Calu3 (cell line): ENCODE measurements at regions of chr2 and their contacts with region 1.

Region 1: GRCh38 chr2:163471947-163472346 is 263.9 kb downstream of the FIGN start:
- DNase-seq: peak; percentile 20
- H3K4me3 Mint-ChIP-seq: no peak overlapping the region
- H3K27ac Mint-ChIP-seq: no peak overlapping the region
- H3K4me1 Mint-ChIP-seq: peaks cover 8% of the 10 kb centered on the region
- H3K27me3 Mint-ChIP-seq: no peaks in the 10 kb centered on the region
- CTCF ChIP-seq: peak; percentile 34

Region 2: DNA sequence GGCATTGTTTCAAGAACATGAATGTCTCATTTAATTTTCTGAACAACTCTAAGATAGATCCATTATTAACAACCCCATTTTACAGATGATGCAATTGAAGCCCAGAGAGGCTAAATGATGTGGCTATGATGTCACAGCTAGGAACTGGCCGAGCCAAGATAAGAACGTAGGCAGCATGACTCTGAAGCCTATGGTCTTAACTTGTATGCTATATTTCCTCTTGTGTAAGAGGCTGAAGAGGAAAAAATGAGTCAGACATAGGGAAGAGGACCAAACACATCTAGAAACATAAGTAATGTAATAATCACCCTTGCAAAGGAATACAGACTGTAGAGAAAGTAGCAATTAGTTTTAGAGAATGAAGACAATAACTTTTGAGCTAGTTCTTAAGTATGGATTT is 152.9 kb before region 1 on chr2:
- CTCF ChIA-PET with region 1: no interaction called
- intact Hi-C with region 1: no loop called
- DNase-seq: no peak
- H3K4me3 Mint-ChIP-seq: no peak overlapping the region
- H3K27ac Mint-ChIP-seq: no peak overlapping the region
- H3K4me1 Mint-ChIP-seq: no peaks in the 10 kb centered on the region
- H3K27me3 Mint-ChIP-seq: no peaks in the 10 kb centered on the region
- CTCF ChIP-seq: no peak

Region 3: DNA sequence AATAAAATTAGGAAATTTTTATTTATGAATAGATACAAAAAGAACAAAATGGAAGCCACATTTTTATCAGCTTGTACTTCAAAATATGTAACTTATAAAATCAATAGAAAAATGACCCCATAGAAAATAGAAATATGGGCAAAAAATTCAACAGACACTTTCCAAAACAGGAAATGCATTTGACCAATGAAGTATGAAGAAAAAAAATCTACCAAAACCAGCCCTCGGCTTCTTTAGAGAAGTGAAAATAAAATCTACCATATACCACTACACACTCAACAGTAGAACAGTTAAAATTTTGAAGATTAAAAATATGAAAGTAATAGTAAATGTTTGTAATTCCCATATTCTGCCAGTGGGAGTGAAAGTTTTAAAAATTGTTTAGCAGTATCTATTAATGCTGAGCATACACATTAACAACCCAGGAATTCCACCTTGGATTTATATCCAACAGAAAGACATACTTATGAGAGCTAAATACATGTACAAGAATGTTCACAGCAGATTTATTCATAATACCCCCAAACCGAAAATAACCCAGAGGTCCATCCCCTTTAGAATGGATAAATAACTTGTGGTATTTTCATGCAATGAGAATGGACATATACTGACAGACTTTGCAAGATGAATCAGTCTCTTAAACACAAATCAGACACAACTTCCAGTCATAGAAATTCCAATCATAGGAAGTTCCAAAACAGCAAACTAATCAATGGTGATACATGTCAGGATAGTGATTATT is 54.2 kb before region 1 on chr2:
- CTCF ChIA-PET with region 1: no interaction called
- intact Hi-C with region 1: no loop called
- DNase-seq: no peak
- H3K4me3 Mint-ChIP-seq: no peak overlapping the region
- H3K27ac Mint-ChIP-seq: no peak overlapping the region
- H3K4me1 Mint-ChIP-seq: no peaks in the 10 kb centered on the region
- H3K27me3 Mint-ChIP-seq: no peaks in the 10 kb centered on the region
- CTCF ChIP-seq: no peak

Region 4: GRCh38 chr2:163436963-163437362 is 35.0 kb before region 1 on chr2:
- CTCF ChIA-PET with region 1: no interaction called
- intact Hi-C with region 1: no loop called
- DNase-seq: no peak
- H3K4me3 Mint-ChIP-seq: no peak overlapping the region
- H3K27ac Mint-ChIP-seq: no peak overlapping the region
- H3K4me1 Mint-ChIP-seq: no peaks in the 10 kb centered on the region
- H3K27me3 Mint-ChIP-seq: no peaks in the 10 kb centered on the region
- CTCF ChIP-seq: no peak

Region 5: GRCh38 chr2:163610817-163611556 is 139.0 kb after region 1 on chr2:
- CTCF ChIA-PET with region 1: interaction called, 4 read pairs
- intact Hi-C with region 1: loop called (anchors 5 kb)
- DNase-seq: peak; percentile 43
- H3K4me3 Mint-ChIP-seq: no peak overlapping the region
- H3K27ac Mint-ChIP-seq: no peak overlapping the region
- H3K4me1 Mint-ChIP-seq: peaks cover 7% of the 10 kb centered on the region
- H3K27me3 Mint-ChIP-seq: no peaks in the 10 kb centered on the region
- CTCF ChIP-seq: no peak

Region 6: DNA sequence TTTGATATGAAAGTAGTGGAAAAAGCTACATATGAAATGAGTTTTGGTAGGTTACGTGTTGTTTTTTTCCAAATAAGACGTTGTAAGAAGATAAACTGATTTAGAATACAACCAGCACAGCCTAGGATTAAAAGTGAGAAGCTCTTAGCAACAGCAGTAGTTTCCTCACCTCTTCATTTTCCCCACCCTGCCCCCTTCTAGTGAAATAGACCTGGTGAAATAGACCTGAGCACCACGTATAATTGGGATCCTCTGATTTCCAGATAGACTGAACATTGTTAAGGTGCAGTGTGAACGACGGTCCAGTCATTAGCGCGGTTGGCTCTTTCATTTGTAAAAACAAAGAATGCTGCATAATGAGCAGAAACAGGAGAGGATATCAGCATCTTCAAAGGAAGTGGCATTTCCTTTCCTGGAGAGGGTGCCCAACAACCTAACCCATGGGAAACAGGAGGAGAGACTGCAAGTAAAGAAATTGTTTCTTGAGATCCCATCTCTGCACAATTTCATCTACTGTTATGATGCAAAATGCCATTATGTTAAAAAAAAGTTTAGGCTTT is 149.6 kb after region 1 on chr2:
- CTCF ChIA-PET with region 1: no interaction called
- intact Hi-C with region 1: no loop called
- DNase-seq: no peak
- H3K4me3 Mint-ChIP-seq: no peak overlapping the region
- H3K27ac Mint-ChIP-seq: no peak overlapping the region
- H3K4me1 Mint-ChIP-seq: no peaks in the 10 kb centered on the region
- H3K27me3 Mint-ChIP-seq: no peaks in the 10 kb centered on the region
- CTCF ChIP-seq: no peak

Region 7: GRCh38 chr2:164061129-164061746 is 589.3 kb after region 1 on chr2:
- CTCF ChIA-PET with region 1: interaction called, 4 read pairs
- intact Hi-C with region 1: loop called (anchors 2 kb)
- DNase-seq: peak; percentile 66
- H3K4me3 Mint-ChIP-seq: no peak overlapping the region
- H3K27ac Mint-ChIP-seq: no peak overlapping the region
- H3K4me1 Mint-ChIP-seq: no peaks in the 10 kb centered on the region
- H3K27me3 Mint-ChIP-seq: no peaks in the 10 kb centered on the region
- CTCF ChIP-seq: no peak